GM18951 (cell line): ENCODE measurements at regions of chr7 and their contacts with region 1.

Region 1: GRCh38 chr7:25259587-25260243 is 31.4 kb upstream of the NPVF start:
- POLR2A ChIP-seq: no peak

Region 2: GRCh38 chr7:24948739-24949138 is 311.0 kb before region 1 on chr7:
- in situ Hi-C with region 1: no loop called
- POLR2A ChIP-seq: no peak

Region 3: DNA sequence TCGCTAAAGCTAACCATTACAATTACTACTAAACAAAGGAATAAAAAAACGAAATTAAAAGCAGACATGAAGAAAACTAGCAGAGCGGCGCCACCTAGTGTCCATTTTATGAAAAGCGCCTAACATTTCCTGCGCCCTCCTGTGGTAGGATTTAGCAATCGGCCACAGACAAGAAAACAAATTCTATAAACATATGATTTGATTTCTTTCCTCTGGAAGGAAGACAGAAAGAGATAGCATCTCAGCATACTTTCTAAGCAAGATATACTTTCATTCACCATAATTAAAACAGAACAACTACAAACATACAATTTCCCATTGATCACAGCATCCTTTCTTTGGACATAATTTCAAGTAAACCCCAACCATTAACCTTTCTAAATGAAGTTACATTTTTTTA is 306.2 kb after region 1 on chr7:
- in situ Hi-C with region 1: loop called (anchors 10 kb)
- POLR2A ChIP-seq: no peak

Region 4: DNA sequence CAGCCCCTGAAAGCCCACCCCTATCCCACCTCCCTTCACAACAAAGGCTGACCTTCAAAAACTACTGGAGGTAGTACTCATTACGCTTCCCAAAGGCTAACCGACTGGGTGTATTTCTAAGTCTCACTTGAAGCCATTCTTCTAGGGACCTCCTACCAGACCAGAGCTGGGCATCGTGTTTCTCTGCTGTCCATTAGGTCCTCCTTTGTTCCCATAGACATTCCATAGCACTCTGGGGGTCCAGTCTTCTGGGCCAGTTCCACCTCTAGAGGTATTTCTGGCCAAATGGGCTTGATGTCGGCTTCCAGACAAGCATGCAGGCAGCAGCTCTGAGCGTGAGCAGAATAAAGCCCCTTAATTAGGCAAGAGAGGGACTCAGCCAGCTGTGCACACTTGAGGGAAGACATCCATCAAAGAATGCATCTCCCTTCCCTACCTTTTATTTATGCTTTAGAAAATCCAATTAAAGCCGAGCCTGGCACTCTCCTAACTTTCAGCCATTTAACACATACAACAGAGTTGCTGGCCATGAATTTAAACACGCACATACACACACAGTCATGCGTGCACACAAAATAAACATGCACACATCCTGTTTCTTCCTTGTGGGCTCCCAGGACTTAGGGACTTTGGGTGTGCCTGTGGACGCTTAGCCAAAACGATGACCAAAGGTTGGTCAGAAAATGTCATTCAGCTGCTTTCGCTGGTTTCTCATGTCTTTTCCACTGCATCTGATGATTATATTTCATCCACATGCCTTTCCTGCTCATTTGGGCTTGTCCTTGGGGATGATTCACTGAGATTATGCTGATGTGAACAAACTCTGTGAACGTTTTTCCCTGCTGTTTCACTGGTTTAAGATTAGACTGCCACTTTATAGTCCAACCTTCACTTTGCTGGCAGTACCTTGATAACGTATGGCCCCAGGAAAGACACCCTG is 530.3 kb after region 1 on chr7:
- in situ Hi-C with region 1: no loop called
- POLR2A ChIP-seq: no peak

Region 5: DNA sequence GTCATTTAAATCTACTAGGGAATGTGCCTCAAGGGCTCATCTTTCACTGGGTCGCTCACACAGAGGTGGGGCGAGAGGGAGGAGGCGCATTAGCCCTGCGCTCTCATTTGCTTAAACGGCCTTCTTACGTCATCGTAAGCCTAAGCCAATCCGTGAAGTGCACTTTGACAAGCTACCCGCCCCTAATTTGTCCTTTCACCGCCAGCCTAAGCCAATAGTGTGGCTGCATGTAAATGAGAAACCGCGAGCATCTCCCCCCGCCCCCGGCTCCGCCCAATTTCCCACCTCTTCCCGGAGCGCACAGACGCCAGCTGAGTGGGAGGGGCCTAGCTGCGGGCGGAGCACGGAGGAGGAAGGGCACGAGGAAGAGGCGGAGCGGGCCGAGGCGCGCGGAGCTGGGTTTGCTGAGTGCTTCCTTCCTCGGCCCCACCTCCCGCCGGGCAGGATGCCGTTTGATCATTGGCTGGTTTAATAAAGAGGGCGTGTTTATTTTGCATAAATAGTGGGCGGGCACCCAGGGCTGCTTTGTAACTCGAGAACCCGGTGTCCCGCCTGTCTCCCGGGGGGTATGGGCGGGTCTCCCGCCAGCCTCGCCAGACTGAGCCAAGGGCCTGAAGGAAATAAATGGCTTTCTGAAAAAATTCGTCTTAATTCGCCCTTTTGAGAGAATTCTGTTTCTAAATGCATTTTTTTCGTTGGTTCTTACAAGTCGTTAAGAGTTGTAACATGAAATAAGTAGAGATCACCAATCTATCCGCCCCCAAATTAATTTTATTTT is 602.7 kb after region 1 on chr7:
- in situ Hi-C with region 1: loop called (anchors 25 kb)
- POLR2A ChIP-seq: no peak